AG04450 (cell line): ENCODE measurements at regions of chr19 and their contacts with region 1.

Region 1: GRCh38 chr19:34327851-34328250 is 37.1 kb upstream of the GPI start:
- DNase-seq: no peak
- H3K4me3 ChIP-seq: no peak overlapping the region
- H3K27ac ChIP-seq: no peak overlapping the region
- H3K27me3 ChIP-seq: no peaks in the 10 kb centered on the region
- CTCF ChIP-seq: no peak

Region 2: DNA sequence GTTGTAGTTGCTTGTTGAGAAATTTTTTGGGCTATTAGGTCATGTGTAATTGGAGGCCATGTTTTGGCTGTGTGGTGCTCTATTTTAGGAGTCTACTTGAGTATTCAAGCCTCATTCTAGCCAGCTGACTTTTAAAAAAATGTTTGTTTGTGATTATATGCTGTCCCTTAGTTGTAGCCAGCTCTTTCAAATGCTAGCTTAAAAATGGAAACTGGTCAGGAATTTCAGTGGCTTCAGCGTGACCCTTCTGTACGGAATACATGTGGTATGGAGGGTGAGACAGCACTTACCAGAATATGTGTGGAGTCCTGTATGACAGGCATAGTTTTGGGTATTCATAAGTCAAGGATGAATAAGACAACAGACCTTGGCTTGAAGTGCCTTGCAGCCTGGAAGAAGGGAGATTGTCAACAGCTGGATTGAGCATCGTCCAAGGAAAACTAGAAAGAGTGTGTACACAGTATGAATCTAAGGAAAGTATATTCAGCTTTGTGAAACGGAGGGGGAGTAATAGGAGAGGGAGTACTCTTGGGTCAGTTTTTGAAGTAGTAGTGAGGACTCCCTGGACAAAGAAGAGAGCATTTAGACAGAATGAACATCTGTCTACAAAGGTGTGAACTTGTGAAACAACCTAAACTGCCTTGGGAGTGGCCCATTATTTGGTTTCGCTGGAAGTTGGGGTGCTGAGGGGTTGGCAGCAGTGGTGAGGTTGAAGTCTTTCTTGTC is 133.7 kb after region 1 on chr19:
- CTCF ChIA-PET with region 1: interaction called, 12 read pairs
- POLR2A ChIA-PET with region 1: no interaction called
- DNase-seq: no peak
- H3K4me3 ChIP-seq: no peak overlapping the region
- H3K27ac ChIP-seq: peak overlapping the region; percentile 69
- H3K27me3 ChIP-seq: no peaks in the 10 kb centered on the region
- CTCF ChIP-seq: no peak